ENCODE measurements at regions of chr17 and their contacts with region 1.

Region 1: DNA sequence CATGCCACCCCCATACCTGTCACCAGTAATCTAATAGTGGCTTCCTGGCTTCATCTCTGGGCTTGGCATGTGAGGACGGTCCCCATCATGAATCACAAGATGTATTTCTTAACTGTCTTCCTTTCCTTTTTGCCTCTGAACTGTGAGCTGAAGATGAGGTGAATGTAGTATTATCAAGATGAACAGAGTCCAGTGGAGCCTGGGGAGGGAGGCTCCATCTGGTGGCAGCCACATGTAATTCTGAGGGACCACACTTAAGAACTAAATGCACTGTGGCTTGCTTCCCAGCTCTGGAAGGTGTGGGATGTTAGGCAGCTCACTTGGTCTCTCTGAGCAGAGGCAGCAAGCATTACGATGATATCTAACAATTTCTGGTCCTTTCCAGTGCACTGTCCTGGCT is 354.9 kb upstream of the ASIC2 start:
- DNase-seq: no peak
- ATAC-seq: peak; percentile 73
- H3K4me3 ChIP-seq: no peak overlapping the region
- H3K27ac ChIP-seq: no peak overlapping the region
- H3K4me1 ChIP-seq: no peaks in the 10 kb centered on the region
- H3K27me3 ChIP-seq: no peaks in the 10 kb centered on the region; a peak in 2 of 4 replicates
- CTCF ChIP-seq: peak; percentile 32 to 56 (median 47)
- EP300 ChIP-seq: no peak
- POLR2A ChIP-seq: no peak
- RAD21 ChIP-seq: peak; percentile 36; the same call in 1 of the 2 replicates

Region 2: DNA sequence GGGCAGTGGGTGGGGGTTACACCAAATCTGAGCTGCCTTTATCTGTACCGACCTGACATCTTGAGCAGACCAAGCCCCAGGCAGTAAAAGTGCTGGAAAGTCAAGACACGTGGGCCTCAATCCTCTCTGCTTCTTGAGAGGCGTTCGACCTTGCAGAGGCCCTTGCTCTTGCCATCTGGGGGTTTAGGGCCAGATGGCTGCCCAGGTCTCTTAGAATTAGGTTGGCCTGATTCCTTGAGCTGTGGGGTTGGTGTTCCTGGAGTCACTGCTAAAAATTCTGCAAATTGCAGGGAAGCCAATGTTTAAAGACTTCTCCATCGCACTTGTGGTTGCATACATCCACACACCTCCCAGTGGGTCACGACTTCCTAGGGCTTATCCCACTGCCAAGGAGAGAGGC is 116.6 kb before region 1 on chr17:
- CTCF ChIA-PET with region 1: no interaction called
- POLR2A ChIA-PET with region 1: no interaction called
- RAD21 ChIA-PET with region 1: no interaction called
- SMC1A ChIA-PET with region 1: no interaction called
- in situ Hi-C with region 1: no loop called
- intact Hi-C with region 1: loop called (anchors 5 kb)
- DNase-seq: no peak
- ATAC-seq: no peak
- H3K4me3 ChIP-seq: no peak overlapping the region
- H3K27ac ChIP-seq: no peak overlapping the region
- H3K4me1 ChIP-seq: no peaks in the 10 kb centered on the region
- H3K27me3 ChIP-seq: peaks cover 0 to 4% of the 10 kb centered on the region in 2 experiments; a peak in 1 of 4 replicates
- CTCF ChIP-seq: no peak
- EP300 ChIP-seq: no peak
- POLR2A ChIP-seq: no peak
- RAD21 ChIP-seq: no peak

Region 3: DNA sequence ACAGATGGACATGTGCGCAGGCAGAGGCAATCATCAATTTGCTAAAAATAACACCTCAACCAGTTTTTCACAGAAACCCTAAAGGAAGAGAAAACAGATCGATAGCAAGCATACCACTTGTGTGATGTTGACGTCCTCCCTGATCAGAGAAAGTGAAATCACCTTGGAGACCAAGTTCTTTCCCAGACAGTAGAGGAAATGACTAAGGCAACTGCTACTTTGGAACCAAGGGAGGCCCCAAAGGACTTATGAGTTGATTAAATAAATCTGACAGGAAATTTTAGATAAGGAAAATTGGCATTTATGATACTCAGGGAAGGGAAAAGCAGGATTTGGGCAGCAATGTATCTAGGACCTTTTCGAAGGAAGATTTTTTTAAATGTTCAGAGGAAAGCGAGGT is 87.8 kb before region 1 on chr17:
- CTCF ChIA-PET with region 1: no interaction called
- POLR2A ChIA-PET with region 1: no interaction called
- RAD21 ChIA-PET with region 1: no interaction called
- SMC1A ChIA-PET with region 1: no interaction called
- in situ Hi-C with region 1: no loop called
- intact Hi-C with region 1: no loop called
- DNase-seq: no peak
- ATAC-seq: 0 out of 3 replicates have a peak, but pooled peaks have one; percentile 17
- H3K4me3 ChIP-seq: no peak overlapping the region
- H3K27ac ChIP-seq: no peak overlapping the region
- H3K4me1 ChIP-seq: no peaks in the 10 kb centered on the region
- H3K27me3 ChIP-seq: no peaks in the 10 kb centered on the region
- CTCF ChIP-seq: no peak
- EP300 ChIP-seq: no peak
- POLR2A ChIP-seq: no peak
- RAD21 ChIP-seq: no peak

Region 4: GRCh38 chr17:33583518-33584417 is 64.2 kb before region 1 on chr17:
- CTCF ChIA-PET with region 1: no interaction called
- POLR2A ChIA-PET with region 1: no interaction called
- RAD21 ChIA-PET with region 1: no interaction called
- SMC1A ChIA-PET with region 1: no interaction called
- in situ Hi-C with region 1: no loop called
- intact Hi-C with region 1: loop called (anchors 10 kb)
- DNase-seq: no peak
- ATAC-seq: no peak
- H3K4me3 ChIP-seq: no peak overlapping the region
- H3K27ac ChIP-seq: no peak overlapping the region
- H3K4me1 ChIP-seq: no peaks in the 10 kb centered on the region
- H3K27me3 ChIP-seq: no peaks in the 10 kb centered on the region; a peak in 1 of 4 replicates
- CTCF ChIP-seq: no peak
- EP300 ChIP-seq: no peak
- POLR2A ChIP-seq: no peak
- RAD21 ChIP-seq: no peak

Measured in GM12878 (cell line).